Head of caudate nucleus (tissue), 42 donors: ENCODE measurements at regions of chr3 and their contacts with region 1.

Region 1: DNA sequence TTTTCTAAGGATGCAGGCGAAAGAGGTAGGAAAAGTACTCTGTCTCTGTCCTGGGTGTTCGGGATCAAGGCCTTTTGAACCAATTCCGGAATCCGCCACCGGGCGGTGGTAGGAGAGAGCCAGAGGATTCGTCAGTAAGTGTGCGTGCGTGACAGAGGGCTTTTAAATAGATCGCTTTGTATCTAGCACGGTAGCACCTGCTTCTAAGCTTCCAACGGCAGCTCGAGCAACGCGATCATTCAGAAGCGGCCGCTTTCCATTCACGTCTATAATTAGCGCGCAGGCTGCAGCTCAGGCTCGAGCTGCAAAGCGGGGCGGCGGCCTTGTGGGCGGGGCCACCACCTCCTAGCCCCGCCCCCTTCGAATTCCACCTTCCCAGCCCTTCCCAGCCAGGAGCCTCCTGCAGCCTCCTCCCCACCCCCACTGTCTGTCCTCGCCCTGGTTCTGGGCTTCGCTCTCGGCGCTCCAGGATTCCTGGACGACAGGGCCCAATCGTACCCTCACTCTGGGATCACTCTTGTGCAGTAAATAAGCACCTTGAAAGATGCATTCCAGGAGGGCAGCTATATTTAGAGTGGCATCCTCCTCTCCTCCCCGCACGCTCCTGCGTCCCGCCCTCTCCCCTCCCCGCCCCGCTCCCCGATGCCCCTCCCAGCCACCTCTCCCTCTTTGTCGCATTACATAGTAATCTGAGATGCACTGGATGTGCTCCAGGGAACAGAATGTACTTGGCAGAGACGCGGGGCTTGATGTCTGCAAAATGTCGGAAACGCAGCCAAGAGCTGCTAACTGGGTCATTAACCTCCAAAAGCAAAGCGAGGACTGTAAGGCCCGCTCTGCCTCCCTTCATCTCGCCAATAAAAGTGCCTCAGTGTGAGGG is 224.1 kb upstream of the TPRG1 start:
- DNase-seq: peak; percentile 82 to 97 (median 93)

Region 2: DNA sequence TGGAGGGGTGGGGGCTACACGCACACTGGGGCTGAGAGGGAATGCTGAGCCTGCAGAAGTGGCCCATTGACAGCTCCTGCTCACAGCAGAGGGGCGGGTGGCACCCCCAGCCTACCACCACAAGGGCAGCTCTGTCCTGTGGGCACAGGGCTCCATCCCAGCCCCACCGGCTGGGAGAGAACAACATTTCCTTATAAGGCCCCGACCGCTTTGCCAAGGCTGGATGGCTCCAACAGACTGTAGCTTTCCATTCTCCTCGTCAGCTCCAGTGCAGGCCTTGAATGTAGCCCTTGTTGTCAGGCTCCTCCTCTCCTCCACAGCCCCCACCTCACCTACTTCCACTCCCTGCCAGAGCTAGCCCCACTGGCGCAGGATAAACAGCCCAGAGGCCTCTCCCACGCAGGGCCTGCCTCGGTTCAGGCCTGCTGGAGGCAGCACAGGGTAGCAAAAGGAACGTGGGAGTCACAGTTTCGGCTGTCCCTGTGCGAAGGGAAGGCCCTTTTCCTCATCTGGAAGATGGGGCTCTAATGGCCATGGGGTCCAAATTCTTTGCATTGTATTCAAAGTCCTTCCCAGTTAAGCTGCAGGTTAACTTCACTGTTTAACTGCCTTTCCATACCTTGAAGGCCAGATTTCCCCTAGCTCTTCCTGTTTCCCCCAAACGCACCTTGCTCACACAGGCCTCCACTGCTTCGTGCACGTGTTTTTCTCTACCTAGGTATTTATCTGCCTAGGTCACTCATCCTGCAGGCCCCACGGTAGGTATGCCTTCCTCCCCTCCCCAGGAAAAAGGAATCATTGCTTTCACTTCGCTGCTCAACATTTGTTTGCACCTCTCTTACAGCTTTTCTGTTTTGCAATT is 895.2 kb before region 1 on chr3:
- intact Hi-C with region 1: loop called (anchors 2 kb)
- DNase-seq: peak; percentile 83 to 100 (median 97)

Region 3: DNA sequence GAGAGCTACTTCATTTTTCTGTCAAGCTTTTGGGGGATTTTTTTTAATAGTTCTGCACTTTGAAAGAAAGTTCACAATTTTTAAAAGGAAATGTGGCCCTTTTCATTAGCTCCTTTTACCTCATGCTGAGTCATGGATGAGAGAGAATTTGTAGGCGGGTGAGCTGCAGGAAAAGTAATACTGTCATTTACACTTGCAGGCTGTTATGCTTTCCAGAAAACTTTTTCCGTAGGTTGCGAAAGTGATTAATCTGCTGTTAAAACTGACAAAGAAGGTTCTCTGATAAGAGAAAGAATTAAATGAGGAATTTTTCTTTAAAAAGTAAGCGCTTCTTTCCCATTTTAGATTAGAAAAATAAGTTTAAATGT is 363.5 kb before region 1 on chr3:
- intact Hi-C with region 1: loop called (anchors 10 kb)
- DNase-seq: peak in 18 of 42 donors; percentile 13 to 76 (median 48)

Region 4: DNA sequence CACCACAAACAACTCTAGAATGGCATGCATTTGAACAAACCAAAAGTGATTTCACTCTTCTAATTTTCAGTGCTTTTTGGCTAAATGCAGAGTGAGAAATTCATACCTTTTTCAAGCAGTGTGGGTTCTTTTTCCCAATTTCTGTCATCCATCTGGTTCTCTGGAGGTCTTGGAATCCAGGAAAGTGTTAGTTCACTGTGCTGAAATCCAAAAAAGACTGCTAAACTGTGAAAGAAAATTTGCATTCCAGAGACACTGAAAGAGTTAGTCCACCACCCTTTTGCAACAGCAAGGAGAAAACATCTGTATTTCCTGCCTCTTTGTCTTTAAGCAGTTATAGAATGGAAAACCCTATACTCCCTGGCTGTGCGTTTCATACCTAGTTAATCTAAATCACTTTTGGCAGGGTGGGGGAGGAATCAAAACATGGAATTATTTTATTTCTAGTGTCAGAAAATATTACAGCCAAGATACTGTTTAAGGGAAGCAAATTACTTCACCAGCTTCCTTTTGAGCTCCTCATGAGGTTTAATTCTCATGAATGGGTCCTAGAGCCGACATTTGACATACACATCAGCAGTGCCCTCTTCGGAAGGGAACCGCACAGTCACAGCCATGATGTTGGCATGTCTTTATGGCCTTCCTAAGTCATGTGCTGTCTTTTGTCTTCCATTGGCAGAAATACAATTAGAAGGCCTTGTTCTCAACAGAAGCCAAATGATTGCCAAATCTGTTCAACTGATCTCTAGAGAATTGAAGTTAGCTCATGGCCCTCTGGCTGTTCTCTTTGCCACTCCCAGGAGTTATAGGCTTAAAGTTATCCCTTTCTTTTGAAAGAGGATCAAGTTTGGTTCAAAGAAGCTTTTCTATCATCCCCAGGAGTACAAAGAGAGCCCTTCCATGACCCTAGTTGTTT is 93.5 kb before region 1 on chr3:
- intact Hi-C with region 1: loop called (anchors 10 kb)
- DNase-seq: peak in 17 of 42 donors; percentile 13 to 76 (median 35)

Region 5: DNA sequence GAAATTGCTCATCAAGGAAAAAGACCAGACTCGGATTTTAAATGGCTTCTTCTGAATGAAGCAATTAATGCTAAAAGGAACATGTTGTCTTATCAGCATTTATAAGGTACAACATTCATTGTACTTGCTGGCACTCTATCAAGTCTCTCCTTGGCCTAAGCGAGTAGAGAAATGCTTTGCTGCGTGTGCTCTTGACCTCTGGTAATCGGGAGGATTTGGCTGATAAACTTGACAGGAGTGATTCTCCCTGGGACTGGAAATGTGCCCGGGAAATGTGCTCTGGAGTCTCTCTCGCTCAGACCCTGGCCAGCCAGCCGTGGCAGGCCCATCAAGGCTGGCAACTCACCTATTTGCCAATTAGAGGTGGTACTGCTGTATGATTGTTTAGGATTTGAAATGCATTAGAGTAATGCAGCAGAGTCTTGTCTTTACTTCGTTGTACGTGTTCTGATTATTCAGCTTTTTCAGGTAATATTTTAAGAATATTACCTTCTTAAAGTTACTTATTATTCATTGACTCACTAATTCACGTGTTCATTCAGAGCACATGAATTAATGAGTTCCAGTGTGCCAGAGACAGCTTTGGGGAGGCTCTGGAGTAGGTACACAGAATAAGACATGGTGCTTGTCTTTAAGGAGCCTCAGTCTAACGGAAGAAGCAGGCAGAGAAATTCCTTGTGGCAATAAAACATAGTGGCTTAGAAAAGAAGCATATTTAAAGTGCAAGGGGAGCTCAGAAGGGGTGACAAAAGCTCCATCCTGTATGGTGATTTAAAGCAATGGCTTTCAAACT is 176.2 kb after region 1 on chr3:
- intact Hi-C with region 1: no loop called
- DNase-seq: peak in 12 of 42 donors; percentile 3 to 47 (median 16)